Posterior cingulate gyrus (tissue), 11 donors: ENCODE measurements at regions of chr11 and their contacts with region 1.

Region 1: GRCh38 chr11:22304337-22304961 is 33.7 kb upstream of the SLC17A6 start:
- DNase-seq: no peak

Region 2: GRCh38 chr11:22169833-22170232 is 134.6 kb before region 1 on chr11:
- intact Hi-C with region 1: loop called (anchors 1 kb)
- DNase-seq: no peak

Region 3: DNA sequence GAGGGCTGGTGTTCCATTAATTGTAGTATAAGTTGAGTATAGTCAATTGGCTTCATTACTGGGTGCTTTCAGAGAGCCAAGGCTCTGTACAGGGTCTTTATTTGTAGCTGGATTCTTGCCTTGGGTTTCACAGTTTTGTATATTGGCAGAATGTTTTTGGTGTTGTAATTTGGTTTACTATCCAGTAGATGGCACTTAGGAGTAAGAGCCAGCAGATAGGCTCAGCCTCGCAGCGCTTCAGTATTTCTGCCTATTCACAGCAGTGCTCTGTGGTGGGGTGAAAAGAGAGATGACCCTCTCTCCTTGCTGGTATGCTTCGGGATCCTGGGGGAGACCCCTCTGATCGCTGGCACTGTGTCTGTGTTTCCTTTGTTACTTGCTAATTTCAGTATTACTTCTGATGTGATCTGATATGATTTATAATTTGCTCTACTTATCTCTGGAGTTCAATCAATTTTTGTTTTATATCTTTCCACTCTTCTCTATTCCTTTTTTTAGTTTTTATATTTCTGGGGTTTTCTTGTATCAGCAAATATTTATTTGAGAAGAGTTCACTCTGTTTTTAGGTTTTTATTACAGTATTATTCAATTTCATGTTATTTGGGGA is 59.4 kb before region 1 on chr11:
- intact Hi-C with region 1: loop called (anchors 5 kb)
- DNase-seq: peak in 7 of 10 donors; percentile 4 to 78 (median 24)

Region 4: GRCh38 chr11:22263613-22264012 is 40.8 kb before region 1 on chr11:
- intact Hi-C with region 1: no loop called
- DNase-seq: no peak

Region 5: DNA sequence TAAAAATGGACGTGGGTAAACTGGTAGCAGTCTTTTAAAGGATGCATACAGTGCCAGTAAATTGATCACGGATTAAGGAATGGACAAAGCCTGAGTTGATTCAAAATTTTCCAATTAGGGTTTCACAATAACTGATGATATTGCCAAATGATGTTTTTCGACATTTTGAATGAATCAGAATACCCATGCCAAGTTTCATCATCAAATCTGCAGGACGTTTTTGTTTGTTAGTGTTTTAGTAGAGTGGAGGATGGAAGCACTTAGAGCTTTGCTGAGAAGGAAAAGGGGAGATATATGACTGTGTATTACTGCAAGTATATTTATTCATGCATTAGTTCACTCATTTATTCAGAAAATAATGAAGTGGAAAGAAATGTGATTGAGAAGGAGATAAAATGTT is 112.0 kb after region 1 on chr11:
- intact Hi-C with region 1: no loop called
- DNase-seq: no peak

Region 6: DNA sequence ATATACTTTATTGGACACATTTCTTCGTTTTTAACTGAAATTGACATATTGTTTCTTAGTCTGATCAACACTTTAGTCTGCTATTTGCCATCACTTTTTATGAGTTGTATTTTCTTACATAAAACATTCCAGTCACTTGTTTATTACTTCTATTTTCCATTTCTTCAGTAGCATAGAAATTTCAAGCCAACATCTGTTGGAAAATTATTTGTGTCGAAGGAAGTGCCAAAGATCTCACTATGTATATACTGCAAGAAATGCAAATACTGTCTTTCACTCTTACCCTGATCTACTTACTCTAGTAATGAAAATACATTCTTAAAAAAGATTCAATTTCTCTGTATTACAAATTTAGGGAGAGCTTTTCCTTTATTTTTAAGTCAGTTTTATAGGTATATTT is 139.6 kb after region 1 on chr11:
- intact Hi-C with region 1: no loop called
- DNase-seq: no peak